ENCODE measurements at regions of chr10 and their contacts with region 1.

Region 1: GRCh38 chr10:130707389-130707979 is 571.3 kb downstream of the GLRX3 start:
- DNase-seq: no peak
- H3K4me3 ChIP-seq: no peak overlapping the region
- H3K27ac ChIP-seq: no peak overlapping the region
- H3K4me1 ChIP-seq: no peaks in the 10 kb centered on the region
- H3K27me3 ChIP-seq: no peaks in the 10 kb centered on the region
- CTCF ChIP-seq: peak; percentile 32 to 61 (median 36)
- EP300 ChIP-seq: no peak
- POLR2A ChIP-seq: no peak
- RAD21 ChIP-seq: peak; percentile 7 to 33; a peak in 3 of 4 replicates

Region 2: GRCh38 chr10:130453036-130453720 is 254.3 kb before region 1 on chr10:
- CTCF ChIA-PET with region 1: no interaction called
- POLR2A ChIA-PET with region 1: no interaction called
- DNase-seq: no peak
- H3K4me3 ChIP-seq: no peak overlapping the region
- H3K27ac ChIP-seq: no peak overlapping the region
- H3K4me1 ChIP-seq: no peaks in the 10 kb centered on the region; a peak in 1 of 7 replicates
- H3K27me3 ChIP-seq: no peaks in the 10 kb centered on the region
- CTCF ChIP-seq: no peak
- EP300 ChIP-seq: no peak
- POLR2A ChIP-seq: no peak
- RAD21 ChIP-seq: no peak; a peak in 1 of 4 replicates

Region 3: GRCh38 chr10:130686689-130687300 is 20.7 kb before region 1 on chr10:
- CTCF ChIA-PET with region 1: interaction called, 14 read pairs
- POLR2A ChIA-PET with region 1: no interaction called
- DNase-seq: peak in 1 of 2 experiments; percentile 13
- H3K4me3 ChIP-seq: no peak overlapping the region
- H3K27ac ChIP-seq: no peak overlapping the region
- H3K4me1 ChIP-seq: no peaks in the 10 kb centered on the region
- H3K27me3 ChIP-seq: no peaks in the 10 kb centered on the region
- CTCF ChIP-seq: peak; percentile 49 to 90 (median 75)
- EP300 ChIP-seq: no peak
- POLR2A ChIP-seq: no peak
- RAD21 ChIP-seq: peak; percentile 95 to 96

Region 4: GRCh38 chr10:130696870-130697269 is 10.6 kb before region 1 on chr10:
- CTCF ChIA-PET with region 1: interaction called, 14 read pairs
- POLR2A ChIA-PET with region 1: no interaction called
- DNase-seq: no peak
- H3K4me3 ChIP-seq: no peak overlapping the region
- H3K27ac ChIP-seq: no peak overlapping the region
- H3K4me1 ChIP-seq: no peaks in the 10 kb centered on the region
- H3K27me3 ChIP-seq: no peaks in the 10 kb centered on the region
- CTCF ChIP-seq: no peak
- EP300 ChIP-seq: no peak
- POLR2A ChIP-seq: no peak
- RAD21 ChIP-seq: no peak

Region 5: GRCh38 chr10:130782467-130782866 is 75.0 kb after region 1 on chr10:
- CTCF ChIA-PET with region 1: interaction called, 10 read pairs
- POLR2A ChIA-PET with region 1: no interaction called
- DNase-seq: peak; percentile 21 to 55
- H3K4me3 ChIP-seq: no peak overlapping the region
- H3K27ac ChIP-seq: no peak overlapping the region
- H3K4me1 ChIP-seq: no peaks in the 10 kb centered on the region
- H3K27me3 ChIP-seq: no peaks in the 10 kb centered on the region
- CTCF ChIP-seq: peak; percentile 28 to 65 (median 60)
- EP300 ChIP-seq: no peak
- POLR2A ChIP-seq: no peak
- RAD21 ChIP-seq: peak; percentile 49 to 59

Measured in H1 (cell line).